Heart right ventricle (tissue), 16 donors: ENCODE measurements at regions of chr1 and their contacts with region 1.

Region 1: GRCh38 chr1:212814537-212815334 is 23.0 kb downstream of the TATDN3 start:
- DNase-seq: no peak
- ATAC-seq: no peak
- H3K4me3 ChIP-seq: no peak overlapping the region
- H3K27ac ChIP-seq: no peak overlapping the region
- H3K4me1 ChIP-seq: peaks cover 0 to 13% (median 0%) of the 10 kb centered on the region in 9 donors
- H3K27me3 ChIP-seq: no peaks in the 10 kb centered on the region
- CTCF ChIP-seq: peak in 7 of 9 donors; percentile 31 to 56 (median 50)

Region 2: GRCh38 chr1:212769459-212770167 is 45.1 kb before region 1 on chr1:
- intact Hi-C with region 1: no loop called
- DNase-seq: no peak
- ATAC-seq: no peak
- H3K4me3 ChIP-seq: no peak overlapping the region
- H3K27ac ChIP-seq: no peak overlapping the region
- H3K4me1 ChIP-seq: peaks cover 0 to 10% (median 0%) of the 10 kb centered on the region in 9 donors
- H3K27me3 ChIP-seq: no peaks in the 10 kb centered on the region
- CTCF ChIP-seq: no peak

Region 3: DNA sequence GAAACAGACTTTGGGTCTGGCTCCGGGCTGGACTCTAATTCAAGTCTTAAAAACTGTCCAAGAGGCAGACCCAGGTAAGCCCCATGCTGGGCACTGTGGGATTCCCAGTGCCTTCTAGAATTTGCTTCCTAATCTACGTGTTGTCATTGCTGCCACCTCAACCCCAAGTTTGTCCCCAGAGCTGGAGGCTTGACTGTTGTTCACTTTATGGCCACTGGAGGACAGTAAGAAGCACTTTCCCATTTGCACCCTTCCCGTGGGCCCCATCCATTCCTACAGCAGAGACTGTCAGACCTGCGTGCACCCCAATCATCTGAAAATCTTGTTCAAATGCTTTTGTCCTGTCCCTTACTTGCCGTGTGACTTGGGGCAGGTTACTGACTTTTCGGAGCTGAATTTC is 106.2 kb after region 1 on chr1:
- intact Hi-C with region 1: no loop called
- DNase-seq: no peak
- ATAC-seq: no peak
- H3K4me3 ChIP-seq: no peak overlapping the region
- H3K27ac ChIP-seq: no peak overlapping the region
- H3K4me1 ChIP-seq: peaks cover 0 to 16% (median 3%) of the 10 kb centered on the region in 9 donors
- H3K27me3 ChIP-seq: peaks cover 0 to 28% (median 6%) of the 10 kb centered on the region in 7 donors
- CTCF ChIP-seq: peak in 5 of 9 donors; percentile 12 to 40 (median 22)

Region 4: DNA sequence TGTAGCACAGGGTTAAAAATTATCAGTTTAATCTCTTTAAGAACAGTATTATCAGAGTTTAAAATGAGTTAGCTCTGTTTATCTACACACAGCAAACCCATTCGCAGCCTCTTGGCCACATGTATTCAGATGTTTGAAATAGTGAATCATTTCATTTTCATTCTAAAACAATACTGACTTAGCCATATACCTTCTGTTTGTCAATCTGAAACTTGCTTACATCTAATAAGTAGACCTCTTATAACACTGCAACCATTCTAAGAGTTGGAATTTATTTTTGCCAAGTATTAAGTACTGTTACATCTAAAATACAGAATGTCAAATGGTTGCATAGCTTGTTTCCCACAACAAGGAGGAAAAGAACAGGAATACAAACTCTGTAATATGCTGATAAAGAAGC is 175.5 kb after region 1 on chr1:
- intact Hi-C with region 1: loop called in 9 of 10 experiments (anchors 2 to 5 kb)
- DNase-seq: no peak
- ATAC-seq: no peak
- H3K4me3 ChIP-seq: no peak overlapping the region
- H3K27ac ChIP-seq: no peak overlapping the region
- H3K4me1 ChIP-seq: peaks cover 0 to 8% (median 0%) of the 10 kb centered on the region in 9 donors
- H3K27me3 ChIP-seq: no peaks in the 10 kb centered on the region
- CTCF ChIP-seq: no peak